Activated T-helper 1 cell treated with anti-CD3 and anti-CD28 coated beads, Interleukin-12 subunit alpha, Interleukin-12 subunit beta, Interleukin-2, Interleukin-4 antibody, amounts not matched to agents 30 ng/mL and 10 ng/mL and 1 ng/mL, durations not matched to agents 14 hours and 24 hours and 36 hours (primary cell): ENCODE measurements at regions of chr6 and their contacts with region 1.

Region 1: GRCh38 chr6:26122793-26123674 is 35.8 kb downstream of the HFE start:
- DNase-seq: peak; percentile 86
- H3K4me3 Mint-ChIP-seq: peak overlapping the region; percentile 99
- H3K27ac Mint-ChIP-seq: peak overlapping the region; percentile 100
- H3K4me1 Mint-ChIP-seq: peaks cover 49% of the 10 kb centered on the region
- H3K27me3 Mint-ChIP-seq: peaks cover 3% of the 10 kb centered on the region

Region 2: DNA sequence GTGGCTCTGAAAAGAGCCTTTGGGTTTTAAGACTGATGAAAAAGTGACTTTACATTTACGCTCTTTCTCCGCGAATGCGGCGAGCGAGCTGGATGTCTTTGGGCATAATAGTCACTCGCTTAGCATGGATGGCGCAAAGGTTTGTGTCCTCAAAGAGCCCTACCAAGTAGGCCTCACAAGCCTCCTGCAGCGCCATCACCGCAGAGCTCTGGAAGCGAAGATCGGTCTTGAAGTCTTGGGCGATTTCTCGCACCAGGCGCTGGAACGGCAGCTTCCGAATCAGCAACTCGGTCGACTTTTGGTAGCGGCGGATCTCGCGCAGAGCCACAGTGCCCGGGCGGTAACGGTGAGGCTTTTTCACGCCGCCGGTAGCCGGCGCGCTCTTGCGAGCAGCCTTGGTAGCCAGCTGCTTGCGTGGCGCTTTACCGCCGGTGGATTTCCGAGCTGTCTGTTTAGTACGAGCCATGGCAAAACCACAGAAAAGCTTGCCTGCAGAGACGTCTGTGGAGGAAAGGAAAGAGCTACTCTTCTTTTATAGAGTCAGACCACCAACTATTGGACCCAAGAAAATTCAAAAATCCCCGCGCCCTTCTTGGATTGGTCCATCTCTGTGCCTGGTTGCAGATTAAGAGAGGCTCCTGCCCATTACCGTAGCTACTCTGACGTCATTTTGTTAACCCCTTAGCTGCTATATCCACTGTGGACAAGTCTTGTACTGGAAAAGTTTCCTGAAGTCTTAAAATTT is 91.3 kb before region 1 on chr6:
- intact Hi-C with region 1: loop called (anchors 1 kb)
- DNase-seq: peak; percentile 89
- H3K4me3 Mint-ChIP-seq: peak overlapping the region; percentile 94
- H3K27ac Mint-ChIP-seq: peak overlapping the region; percentile 98
- H3K4me1 Mint-ChIP-seq: peaks cover 89% of the 10 kb centered on the region
- H3K27me3 Mint-ChIP-seq: peaks cover 2% of the 10 kb centered on the region

Region 3: DNA sequence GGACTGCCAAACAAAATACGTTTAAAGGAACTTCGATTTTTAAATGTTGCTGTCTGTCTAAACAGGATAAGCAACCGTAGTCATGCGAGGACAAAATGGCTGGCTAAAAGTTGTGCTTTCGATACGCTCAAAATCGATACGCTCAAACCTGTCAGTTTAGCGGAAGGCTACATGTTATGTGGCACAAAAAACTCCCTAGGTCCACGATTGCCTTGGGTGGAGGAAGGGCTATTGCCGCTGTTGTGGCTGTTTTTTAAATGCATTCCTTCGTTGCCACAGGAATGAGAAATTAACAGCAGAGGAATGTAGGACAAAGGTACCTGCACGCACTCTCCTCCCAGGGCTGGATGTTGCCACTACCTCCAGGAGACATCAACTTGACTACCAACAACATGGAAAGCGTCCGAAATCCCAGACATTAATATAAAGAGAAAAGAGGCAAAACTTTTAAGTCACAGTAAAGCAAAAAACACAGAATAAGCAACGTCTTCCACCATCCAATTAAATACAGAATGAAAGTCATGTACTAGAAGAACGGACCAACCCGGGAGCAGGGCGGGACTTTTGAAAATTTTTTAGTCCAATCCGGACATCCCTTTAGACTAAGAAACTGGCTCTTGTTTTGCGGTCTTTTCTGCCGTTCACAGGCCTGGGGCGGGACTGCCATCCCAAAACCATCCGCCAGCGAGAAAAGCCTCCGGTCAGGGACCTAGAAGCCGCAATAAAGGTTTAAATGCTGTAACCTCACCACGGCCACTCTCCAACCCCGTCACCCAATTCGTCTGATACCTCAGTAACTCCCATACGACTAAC is 68.0 kb before region 1 on chr6:
- intact Hi-C with region 1: loop called (anchors 1 kb)
- DNase-seq: peak; percentile 83
- H3K4me3 Mint-ChIP-seq: peak overlapping the region; percentile 91
- H3K27ac Mint-ChIP-seq: peak overlapping the region; percentile 99
- H3K4me1 Mint-ChIP-seq: peaks cover 42% of the 10 kb centered on the region
- H3K27me3 Mint-ChIP-seq: peaks cover 3% of the 10 kb centered on the region

Region 4: DNA sequence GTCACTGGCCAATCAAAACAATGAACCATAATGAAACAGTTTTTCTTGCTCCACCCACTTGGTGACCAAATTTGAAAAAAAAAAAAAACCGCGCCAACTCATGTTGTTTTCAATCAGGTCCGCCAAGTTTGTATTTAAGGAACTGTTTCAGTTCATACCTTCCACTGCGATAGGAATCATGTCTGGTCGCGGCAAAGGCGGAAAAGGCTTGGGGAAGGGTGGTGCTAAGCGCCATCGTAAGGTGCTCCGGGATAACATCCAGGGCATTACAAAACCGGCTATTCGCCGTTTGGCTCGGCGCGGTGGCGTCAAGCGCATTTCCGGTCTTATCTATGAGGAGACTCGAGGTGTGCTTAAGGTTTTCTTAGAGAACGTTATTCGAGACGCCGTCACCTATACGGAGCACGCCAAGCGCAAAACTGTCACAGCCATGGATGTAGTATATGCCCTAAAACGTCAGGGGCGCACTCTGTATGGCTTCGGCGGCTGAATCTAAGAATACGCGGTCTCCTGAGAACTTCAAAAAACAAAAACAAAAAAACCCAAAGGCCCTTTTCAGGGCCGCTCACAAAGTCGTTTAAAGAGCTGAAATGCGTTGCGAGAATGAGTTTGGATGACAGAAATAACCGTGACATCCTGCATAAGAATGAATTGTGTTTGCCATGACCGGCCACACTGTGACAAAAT is 19.1 kb before region 1 on chr6:
- intact Hi-C with region 1: loop called (anchors 1 kb)
- DNase-seq: peak; percentile 90
- H3K4me3 Mint-ChIP-seq: peak overlapping the region; percentile 90
- H3K27ac Mint-ChIP-seq: peak overlapping the region; percentile 99
- H3K4me1 Mint-ChIP-seq: peaks cover 25% of the 10 kb centered on the region
- H3K27me3 Mint-ChIP-seq: peaks cover 2% of the 10 kb centered on the region

Region 5: DNA sequence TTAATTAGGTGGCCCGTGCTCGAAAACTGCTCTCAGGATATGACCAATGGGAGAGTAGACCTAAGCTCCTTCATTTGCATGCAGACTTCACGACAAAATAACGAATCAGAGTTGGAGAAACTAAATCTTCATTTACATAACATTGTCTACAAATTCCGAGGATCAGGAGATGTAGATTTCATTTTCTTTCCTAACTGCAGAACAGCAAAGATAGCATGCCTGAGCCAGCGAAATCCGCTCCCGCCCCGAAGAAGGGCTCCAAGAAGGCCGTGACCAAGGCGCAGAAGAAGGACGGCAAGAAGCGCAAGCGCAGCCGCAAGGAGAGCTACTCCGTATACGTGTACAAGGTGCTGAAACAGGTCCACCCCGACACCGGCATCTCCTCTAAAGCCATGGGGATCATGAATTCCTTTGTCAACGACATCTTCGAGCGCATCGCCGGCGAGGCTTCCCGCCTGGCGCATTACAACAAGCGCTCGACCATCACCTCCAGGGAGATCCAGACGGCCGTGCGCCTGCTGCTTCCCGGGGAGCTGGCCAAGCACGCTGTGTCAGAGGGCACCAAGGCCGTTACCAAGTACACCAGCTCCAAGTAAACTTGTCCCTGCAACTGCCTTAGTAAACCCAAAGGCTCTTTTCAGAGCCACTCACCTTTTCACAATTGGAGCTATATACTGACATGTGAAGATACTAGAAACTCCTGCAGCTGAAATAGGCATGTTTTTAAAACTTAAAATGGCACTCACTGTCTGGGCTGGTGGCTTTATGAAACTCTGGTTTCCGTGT is 60.7 kb after region 1 on chr6:
- intact Hi-C with region 1: loop called (anchors 2 kb)
- DNase-seq: peak; percentile 71
- H3K4me3 Mint-ChIP-seq: peak overlapping the region; percentile 86
- H3K27ac Mint-ChIP-seq: peak overlapping the region; percentile 97
- H3K4me1 Mint-ChIP-seq: peaks cover 58% of the 10 kb centered on the region
- H3K27me3 Mint-ChIP-seq: no peaks in the 10 kb centered on the region

Region 6: DNA sequence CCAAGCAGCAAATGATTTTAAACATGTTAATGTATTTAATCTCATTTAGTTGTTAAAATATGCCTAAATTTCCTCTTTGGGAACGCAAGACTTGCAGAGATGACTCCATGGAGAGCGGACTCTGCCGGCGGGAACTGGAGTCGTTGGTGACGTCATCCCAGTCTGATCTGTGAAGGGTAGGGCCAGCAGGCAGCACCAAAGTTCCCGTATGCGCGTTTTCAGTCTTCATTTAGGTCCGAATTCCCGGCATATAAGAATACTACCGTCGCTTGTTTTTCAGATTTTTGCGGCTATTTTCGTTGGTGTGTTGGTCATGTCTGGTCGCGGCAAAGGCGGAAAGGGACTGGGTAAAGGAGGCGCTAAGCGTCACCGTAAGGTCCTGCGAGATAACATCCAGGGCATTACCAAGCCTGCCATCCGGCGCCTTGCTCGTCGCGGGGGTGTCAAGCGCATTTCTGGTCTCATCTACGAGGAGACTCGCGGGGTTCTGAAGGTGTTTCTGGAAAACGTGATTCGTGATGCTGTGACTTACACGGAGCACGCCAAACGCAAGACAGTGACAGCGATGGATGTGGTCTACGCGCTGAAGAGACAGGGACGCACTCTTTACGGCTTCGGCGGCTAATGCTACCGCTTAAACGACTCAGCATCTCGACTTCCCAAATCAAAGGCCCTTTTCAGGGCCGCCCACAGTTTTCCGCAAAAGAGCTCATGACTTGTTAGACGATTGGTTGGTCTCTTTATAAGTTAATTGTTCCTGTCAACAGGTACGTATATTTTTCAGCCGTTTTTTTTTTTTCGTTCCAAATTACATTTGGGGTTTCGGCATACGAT is 81.5 kb after region 1 on chr6:
- intact Hi-C with region 1: loop called (anchors 1 kb)
- DNase-seq: peak; percentile 82
- H3K4me3 Mint-ChIP-seq: no peak overlapping the region
- H3K27ac Mint-ChIP-seq: no peak overlapping the region
- H3K4me1 Mint-ChIP-seq: peaks cover 33% of the 10 kb centered on the region
- H3K27me3 Mint-ChIP-seq: peaks cover 2% of the 10 kb centered on the region